ENCODE measurements at regions of chr4 and their contacts with region 1.

Region 1: GRCh38 chr4:36269101-36269500 is 12.3 kb upstream of the DTHD1 start:
- DNase-seq: peak in 31 of 35 experiments; percentile 9 to 86 (median 51)
- ATAC-seq: peak; percentile 52 to 97 (median 78)
- H3K4me3 ChIP-seq: no peak overlapping the region
- H3K4me3 Mint-ChIP-seq: peak overlapping the region in 1 of 3 donors; percentile 19
- H3K27ac ChIP-seq: peak overlapping the region; percentile 59
- H3K27ac Mint-ChIP-seq: peak overlapping the region; percentile 75 to 78
- H3K4me1 ChIP-seq: peaks cover 8 to 21% of the 10 kb centered on the region in 2 experiments
- H3K4me1 Mint-ChIP-seq: peaks cover 37 to 43% (median 43%) of the 10 kb centered on the region in 3 donors
- H3K27me3 ChIP-seq: no peaks in the 10 kb centered on the region
- H3K27me3 Mint-ChIP-seq: no peaks in the 10 kb centered on the region

Region 2: GRCh38 chr4:36173905-36174304 is 95.2 kb before region 1 on chr4:
- CTCF ChIA-PET with region 1: interaction called in 1 of 2 experiments, 13 read pairs
- POLR2A ChIA-PET with region 1: no interaction called
- DNase-seq: no peak
- ATAC-seq: no peak
- H3K4me3 ChIP-seq: no peak overlapping the region
- H3K4me3 Mint-ChIP-seq: no peak overlapping the region
- H3K27ac ChIP-seq: no peak overlapping the region
- H3K27ac Mint-ChIP-seq: no peak overlapping the region
- H3K4me1 ChIP-seq: no peaks in the 10 kb centered on the region
- H3K4me1 Mint-ChIP-seq: peaks cover 0 to 19% (median 4%) of the 10 kb centered on the region in 3 donors
- H3K27me3 ChIP-seq: no peaks in the 10 kb centered on the region
- H3K27me3 Mint-ChIP-seq: no peaks in the 10 kb centered on the region

Region 3: DNA sequence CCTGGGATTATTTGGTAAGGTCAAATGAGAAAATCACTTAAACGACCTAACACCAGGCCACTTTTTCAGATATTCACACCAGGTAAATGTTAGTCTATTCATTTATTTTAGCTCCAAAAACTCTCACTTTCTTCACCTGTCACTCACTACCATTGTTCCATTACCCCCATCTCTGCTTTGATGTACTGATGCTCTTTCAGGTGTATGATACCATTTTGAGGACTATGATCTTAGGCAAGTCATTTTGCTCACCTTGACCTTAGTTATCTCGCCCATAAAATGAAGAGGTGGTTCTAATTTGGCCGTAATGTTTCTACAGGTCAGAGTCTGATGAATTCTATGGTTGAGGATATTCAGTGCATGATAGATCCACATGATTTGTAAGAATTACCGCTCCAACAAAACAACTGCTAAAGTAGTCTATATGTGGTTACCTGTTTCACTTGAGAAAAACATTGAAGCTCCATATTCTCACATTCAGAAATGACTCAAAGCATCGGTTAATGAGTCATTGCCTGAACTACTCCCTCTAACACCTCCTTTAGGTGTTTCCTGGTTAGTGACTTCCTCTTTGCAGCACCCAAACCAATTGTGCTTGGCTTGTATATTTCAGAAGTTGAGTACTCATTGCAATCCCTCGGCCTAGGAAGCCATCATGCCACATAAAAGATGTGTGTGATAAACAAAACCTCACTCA is 16.8 kb after region 1 on chr4:
- CTCF ChIA-PET with region 1: interaction called in 1 of 2 experiments, 10 read pairs
- POLR2A ChIA-PET with region 1: interaction called in 1 of 2 experiments, 7 read pairs
- DNase-seq: peak in 34 of 35 experiments; percentile 10 to 85 (median 42)
- ATAC-seq: peak; percentile 94 to 97 (median 96)
- H3K4me3 ChIP-seq: no peak overlapping the region
- H3K4me3 Mint-ChIP-seq: peak overlapping the region; percentile 28 to 58 (median 43)
- H3K27ac ChIP-seq: peak overlapping the region; percentile 87
- H3K27ac Mint-ChIP-seq: peak overlapping the region; percentile 94 to 96
- H3K4me1 ChIP-seq: peaks cover 2 to 4% of the 10 kb centered on the region in 2 experiments
- H3K4me1 Mint-ChIP-seq: peaks cover 12 to 58% (median 50%) of the 10 kb centered on the region in 3 donors
- H3K27me3 ChIP-seq: no peaks in the 10 kb centered on the region
- H3K27me3 Mint-ChIP-seq: no peaks in the 10 kb centered on the region

Region 4: DNA sequence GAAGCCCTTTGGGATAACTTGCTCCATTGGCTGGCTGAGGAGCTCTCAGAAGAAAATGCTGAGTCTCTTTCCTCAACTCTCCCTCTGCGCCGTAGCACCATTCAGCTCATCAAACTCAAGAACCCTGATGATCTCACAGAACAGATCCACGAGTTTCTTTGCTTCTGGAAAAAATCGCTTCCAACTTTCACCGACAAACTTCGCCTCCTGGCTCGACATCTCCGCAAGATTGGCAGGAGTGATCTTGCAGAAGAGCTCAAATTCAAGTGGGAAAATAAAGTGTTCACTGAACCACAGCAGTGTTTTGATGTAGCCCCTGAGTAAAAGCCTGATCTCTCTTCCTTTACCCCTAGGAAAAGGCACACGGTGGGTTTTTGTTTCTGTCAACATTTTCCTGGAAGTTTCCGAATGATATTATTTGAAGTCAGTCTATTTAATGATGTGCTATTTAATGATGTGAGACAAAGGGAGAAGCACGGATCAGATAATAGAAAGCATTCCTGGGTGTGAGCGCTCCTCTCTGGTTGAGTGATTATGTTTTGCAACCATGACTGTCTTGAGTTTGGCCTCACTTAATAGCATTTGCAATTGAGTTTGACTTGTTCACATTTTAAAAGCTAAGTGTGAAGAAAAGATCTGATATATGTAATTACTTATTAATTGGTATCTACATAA is 74.5 kb after region 1 on chr4:
- CTCF ChIA-PET with region 1: no interaction called
- POLR2A ChIA-PET with region 1: no interaction called
- DNase-seq: no peak
- ATAC-seq: no peak
- H3K4me3 ChIP-seq: no peak overlapping the region
- H3K4me3 Mint-ChIP-seq: no peak overlapping the region
- H3K27ac ChIP-seq: no peak overlapping the region
- H3K27ac Mint-ChIP-seq: no peak overlapping the region
- H3K4me1 ChIP-seq: peaks cover 0 to 2% of the 10 kb centered on the region in 2 experiments
- H3K4me1 Mint-ChIP-seq: peaks cover 2 to 4% (median 3%) of the 10 kb centered on the region in 3 donors
- H3K27me3 ChIP-seq: no peaks in the 10 kb centered on the region
- H3K27me3 Mint-ChIP-seq: no peaks in the 10 kb centered on the region

Region 5: GRCh38 chr4:36854554-36854953 is 585.5 kb after region 1 on chr4:
- CTCF ChIA-PET with region 1: no interaction called
- POLR2A ChIA-PET with region 1: no interaction called
- DNase-seq: no peak
- ATAC-seq: no peak
- H3K4me3 ChIP-seq: no peak overlapping the region
- H3K4me3 Mint-ChIP-seq: no peak overlapping the region
- H3K27ac ChIP-seq: no peak overlapping the region
- H3K27ac Mint-ChIP-seq: no peak overlapping the region
- H3K4me1 ChIP-seq: no peaks in the 10 kb centered on the region
- H3K4me1 Mint-ChIP-seq: no peaks in the 10 kb centered on the region
- H3K27me3 ChIP-seq: no peaks in the 10 kb centered on the region
- H3K27me3 Mint-ChIP-seq: peaks cover 0 to 5% of the 10 kb centered on the region in 2 donors

Region 6: GRCh38 chr4:37693450-37694190 is 1424.5 kb after region 1 on chr4:
- CTCF ChIA-PET with region 1: no interaction called
- POLR2A ChIA-PET with region 1: no interaction called
- DNase-seq: no peak
- ATAC-seq: no peak
- H3K4me3 ChIP-seq: no peak overlapping the region
- H3K4me3 Mint-ChIP-seq: no peak overlapping the region
- H3K27ac ChIP-seq: no peak overlapping the region
- H3K27ac Mint-ChIP-seq: no peak overlapping the region
- H3K4me1 ChIP-seq: no peaks in the 10 kb centered on the region
- H3K4me1 Mint-ChIP-seq: no peaks in the 10 kb centered on the region
- H3K27me3 ChIP-seq: no peaks in the 10 kb centered on the region
- H3K27me3 Mint-ChIP-seq: no peaks in the 10 kb centered on the region

Region 7: DNA sequence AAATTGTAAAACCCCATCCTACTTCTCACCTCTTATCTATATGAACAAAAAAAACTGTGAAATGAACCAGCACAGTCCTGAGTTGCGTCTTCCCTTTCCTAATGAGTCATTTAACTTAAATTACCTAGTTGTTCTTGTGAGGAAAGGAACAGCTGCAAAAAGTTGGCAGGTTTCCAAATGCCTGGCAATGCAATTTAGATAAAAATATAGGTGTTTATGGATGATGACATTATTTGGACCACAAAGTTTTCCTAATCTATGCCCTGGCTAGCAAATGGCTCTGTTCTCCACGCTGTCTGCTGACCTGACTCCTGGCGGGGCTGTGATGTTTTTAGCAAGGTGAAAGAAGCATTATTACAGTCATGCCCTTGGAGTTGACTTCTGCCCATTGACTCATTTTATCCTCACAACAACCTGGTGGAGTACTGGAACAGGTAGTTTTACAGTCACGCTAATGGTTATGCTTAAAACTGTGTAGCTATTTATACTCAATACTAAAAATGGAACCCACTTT is 1446.8 kb after region 1 on chr4:
- CTCF ChIA-PET with region 1: no interaction called
- POLR2A ChIA-PET with region 1: no interaction called
- DNase-seq: peak in 1 of 35 experiments; percentile 5
- ATAC-seq: no peak
- H3K4me3 ChIP-seq: no peak overlapping the region
- H3K4me3 Mint-ChIP-seq: no peak overlapping the region
- H3K27ac ChIP-seq: no peak overlapping the region
- H3K27ac Mint-ChIP-seq: no peak overlapping the region
- H3K4me1 ChIP-seq: no peaks in the 10 kb centered on the region
- H3K4me1 Mint-ChIP-seq: peaks cover 0 to 2% (median 0%) of the 10 kb centered on the region in 3 donors
- H3K27me3 ChIP-seq: no peaks in the 10 kb centered on the region
- H3K27me3 Mint-ChIP-seq: peaks cover 0 to 2% of the 10 kb centered on the region in 2 donors

Measured in T-cell (primary cell).